ENCODE measurements at regions of chr22 and their contacts with region 1.

Region 1: DNA sequence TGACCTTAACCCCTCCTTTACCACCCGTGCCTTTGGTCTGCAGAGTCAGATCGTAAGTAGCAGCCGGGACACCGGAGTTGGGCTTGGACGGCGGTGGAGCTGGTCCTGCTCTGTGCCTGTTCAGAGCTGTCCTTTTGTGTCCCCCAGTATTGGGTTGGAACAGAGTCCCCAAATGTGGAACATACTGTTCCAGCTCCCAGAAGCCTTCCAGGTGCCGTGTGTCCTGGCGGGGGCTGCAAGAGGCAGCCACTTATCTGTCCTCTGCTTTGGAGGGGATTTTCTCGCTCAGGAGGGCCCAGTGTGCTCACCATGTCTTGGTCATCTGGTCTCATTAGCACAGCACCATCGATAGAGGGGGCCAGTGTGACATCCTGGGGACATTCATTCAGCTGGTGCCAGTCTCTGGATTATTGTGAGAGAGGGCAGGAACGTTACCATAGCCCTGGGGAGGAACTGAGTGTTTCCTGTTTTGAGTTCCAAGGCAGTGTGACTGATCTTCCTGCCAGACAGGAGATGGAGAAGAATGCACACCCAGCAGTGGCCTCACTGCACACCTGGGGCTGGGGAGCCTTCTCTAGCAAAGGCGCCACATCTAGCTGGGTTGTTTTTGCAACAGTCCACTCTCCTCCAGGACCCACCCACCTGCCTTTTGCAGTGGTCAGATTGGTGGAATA is 12.4 kb downstream of the CRELD2 start:
- DNase-seq: peak; percentile 66
- ATAC-seq: peak; percentile 40
- H3K4me3 ChIP-seq: no peak overlapping the region
- H3K27ac ChIP-seq: no peak overlapping the region
- H3K4me1 ChIP-seq: peaks cover 12% of the 10 kb centered on the region
- H3K27me3 ChIP-seq: no peaks in the 10 kb centered on the region
- CTCF ChIP-seq: peak; percentile 68
- POLR2A ChIP-seq: no peak
- RAD21 ChIP-seq: peak; percentile 81

Region 2: DNA sequence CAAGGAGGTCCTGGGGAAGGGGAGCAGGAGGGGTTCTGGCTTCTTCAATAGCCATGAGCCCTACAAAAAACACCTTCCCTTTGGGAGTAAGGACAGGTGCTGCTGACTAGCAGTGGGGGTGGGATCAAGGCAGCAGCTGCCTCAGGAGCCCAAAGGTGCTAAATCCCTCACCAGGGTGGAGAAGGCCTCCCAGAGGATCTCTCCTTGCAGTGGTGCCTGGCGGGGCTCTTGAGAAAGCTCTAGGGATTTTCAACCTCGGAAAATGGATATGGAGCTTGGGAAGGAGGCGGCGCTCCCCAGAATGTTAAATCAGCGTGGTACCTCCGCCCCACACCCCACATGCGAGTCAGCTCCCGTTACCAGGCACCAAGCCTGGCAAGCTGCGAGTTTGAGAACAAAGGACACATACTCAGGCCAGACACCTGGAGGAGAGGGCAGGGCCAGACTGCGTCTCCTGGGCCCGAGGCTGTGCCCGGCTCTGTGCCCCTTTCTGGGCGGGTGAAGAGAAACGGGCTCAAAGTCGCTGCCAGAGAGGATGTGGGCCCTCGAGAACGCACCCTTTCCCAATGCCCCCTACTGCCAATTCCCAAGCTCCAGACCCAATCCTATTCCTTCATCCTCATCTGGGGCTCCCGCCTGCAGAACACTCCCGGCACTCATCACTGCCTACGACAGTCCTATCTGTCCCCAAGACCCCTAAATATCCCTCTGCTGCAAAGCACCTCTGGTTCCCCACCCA is 242.2 kb before region 1 on chr22:
- CTCF ChIA-PET with region 1: no interaction called
- POLR2A ChIA-PET with region 1: no interaction called
- dilution Hi-C with region 1: no loop called
- in situ Hi-C with region 1: no loop called
- intact Hi-C with region 1: no loop called
- DNase-seq: no peak
- ATAC-seq: no peak
- H3K4me3 ChIP-seq: no peak overlapping the region
- H3K27ac ChIP-seq: no peak overlapping the region
- H3K4me1 ChIP-seq: no peaks in the 10 kb centered on the region
- H3K27me3 ChIP-seq: no peaks in the 10 kb centered on the region
- CTCF ChIP-seq: no peak
- POLR2A ChIP-seq: no peak
- RAD21 ChIP-seq: no peak

Region 3: GRCh38 chr22:50030297-50031188 is 99.7 kb after region 1 on chr22:
- CTCF ChIA-PET with region 1: interaction called, 12 read pairs
- POLR2A ChIA-PET with region 1: no interaction called
- dilution Hi-C with region 1: no loop called
- in situ Hi-C with region 1: loop called (anchors 5 kb)
- intact Hi-C with region 1: loop called (anchors 1 kb)
- DNase-seq: peak; percentile 54
- ATAC-seq: peak; percentile 96
- H3K4me3 ChIP-seq: no peak overlapping the region
- H3K27ac ChIP-seq: no peak overlapping the region
- H3K4me1 ChIP-seq: no peaks in the 10 kb centered on the region; the same call in 1 of the 2 replicates
- H3K27me3 ChIP-seq: peaks cover 24% of the 10 kb centered on the region
- CTCF ChIP-seq: peak; percentile 95
- POLR2A ChIP-seq: 0 out of 2 replicates have a peak, but pooled peaks have one; percentile 38
- RAD21 ChIP-seq: peak; percentile 96

Region 4: DNA sequence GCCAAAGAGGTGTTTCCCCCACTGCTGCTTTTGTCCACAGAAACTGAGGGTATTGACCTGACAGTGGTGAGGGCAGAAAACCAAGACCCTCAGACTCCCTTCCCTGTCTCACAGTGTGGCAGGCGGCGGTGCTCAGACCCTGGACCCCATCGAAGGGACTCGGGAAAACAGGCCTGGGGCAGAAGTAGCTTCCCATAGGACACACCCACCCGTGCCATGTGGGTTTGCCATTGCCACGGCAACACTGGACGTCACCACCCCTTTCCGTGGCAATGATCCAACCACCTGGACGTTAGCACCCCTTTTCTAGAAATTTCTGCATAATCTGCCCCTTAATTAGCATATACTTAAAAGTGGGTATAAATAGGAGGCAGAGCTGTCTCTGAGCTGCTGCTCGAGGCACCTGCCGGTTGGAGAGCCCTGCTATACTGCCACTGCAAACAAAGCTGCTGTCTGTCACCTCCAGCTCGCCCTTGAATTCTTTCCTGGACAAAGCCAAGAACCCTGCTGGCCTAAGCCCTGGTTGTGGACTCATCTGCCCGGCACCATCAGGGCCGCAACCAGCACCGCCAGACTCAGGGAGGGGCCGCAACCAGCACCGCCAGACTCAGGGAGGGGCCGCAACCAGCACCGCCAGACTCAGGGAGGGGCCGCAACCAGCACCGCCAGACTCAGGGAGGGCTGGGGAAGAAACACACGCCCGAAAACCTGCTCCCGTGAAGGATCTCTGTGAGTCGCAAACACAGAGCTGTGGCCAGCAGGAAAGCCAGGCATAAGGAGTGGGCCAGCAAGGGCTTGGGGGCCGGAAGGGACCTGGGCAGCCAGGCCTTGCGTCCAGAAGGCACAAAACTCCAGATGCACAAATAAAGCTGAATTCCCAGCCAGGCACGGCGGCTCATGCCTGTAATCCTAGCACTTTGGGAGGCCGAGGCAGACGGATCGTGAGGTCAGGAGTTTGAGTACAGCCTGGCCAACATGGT is 144.0 kb after region 1 on chr22:
- CTCF ChIA-PET with region 1: no interaction called
- POLR2A ChIA-PET with region 1: no interaction called
- dilution Hi-C with region 1: no loop called
- in situ Hi-C with region 1: no loop called
- intact Hi-C with region 1: no loop called
- DNase-seq: no peak
- ATAC-seq: no peak
- H3K4me3 ChIP-seq: no peak overlapping the region
- H3K27ac ChIP-seq: no peak overlapping the region
- H3K4me1 ChIP-seq: no peaks in the 10 kb centered on the region; the same call in 1 of the 2 replicates
- H3K27me3 ChIP-seq: peaks cover 3% of the 10 kb centered on the region; the same call in 1 of the 2 replicates
- CTCF ChIP-seq: no peak
- POLR2A ChIP-seq: no peak
- RAD21 ChIP-seq: no peak

Region 5: DNA sequence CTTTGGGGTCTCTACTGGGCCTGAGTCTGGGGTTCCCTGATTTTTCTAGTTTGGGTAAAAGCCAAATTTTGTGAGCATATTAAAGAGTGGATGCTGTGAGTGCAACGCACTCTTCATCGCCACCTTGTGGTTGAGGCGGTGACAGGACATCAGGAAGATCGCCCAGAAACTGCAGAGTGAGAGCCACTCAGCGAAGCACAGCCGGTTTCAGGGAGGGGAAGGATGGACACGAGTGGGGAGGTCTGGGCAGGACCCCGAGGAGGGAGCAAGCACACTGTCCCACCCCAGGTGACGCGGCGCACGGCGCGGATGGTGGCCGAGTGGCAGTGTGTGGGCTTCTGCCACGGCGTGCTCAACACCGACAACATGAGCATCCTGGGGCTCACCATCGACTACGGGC is 279.0 kb after region 1 on chr22:
- CTCF ChIA-PET with region 1: no interaction called
- POLR2A ChIA-PET with region 1: no interaction called
- dilution Hi-C with region 1: no loop called
- in situ Hi-C with region 1: loop called (anchors 5 kb)
- intact Hi-C with region 1: loop called (anchors 2 kb)
- DNase-seq: peak; percentile 57
- ATAC-seq: peak; percentile 75
- H3K4me3 ChIP-seq: no peak overlapping the region
- H3K27ac ChIP-seq: no peak overlapping the region
- H3K4me1 ChIP-seq: no peaks in the 10 kb centered on the region
- H3K27me3 ChIP-seq: no peaks in the 10 kb centered on the region
- CTCF ChIP-seq: peak; percentile 83
- POLR2A ChIP-seq: no peak
- RAD21 ChIP-seq: peak; percentile 74